GM12878 (cell line): ENCODE measurements at regions of chr1 and their contacts with region 1.

Region 1: GRCh38 chr1:114511032-114511785 is at the start of gene TRIM33:
- DNase-seq: peak; percentile 81
- ATAC-seq: peak; percentile 72
- H3K4me3 ChIP-seq: peak within 1 kb of the TSS; percentile 93
- H3K27ac ChIP-seq: peak within 1 kb of the TSS; percentile 94
- H3K4me1 ChIP-seq: peaks cover 7% of the 10 kb centered on the region; the same call in 1 of the 2 replicates
- H3K27me3 ChIP-seq: no peaks in the 10 kb centered on the region
- CTCF ChIP-seq: no peak
- EP300 ChIP-seq: no peak; a peak in 1 of 4 replicates
- POLR2A ChIP-seq: peak; percentile 85
- RAD21 ChIP-seq: no peak
- polyA plus RNA-seq, gene TRIM33: 9.0 to 10.6 TPM

Region 2: DNA sequence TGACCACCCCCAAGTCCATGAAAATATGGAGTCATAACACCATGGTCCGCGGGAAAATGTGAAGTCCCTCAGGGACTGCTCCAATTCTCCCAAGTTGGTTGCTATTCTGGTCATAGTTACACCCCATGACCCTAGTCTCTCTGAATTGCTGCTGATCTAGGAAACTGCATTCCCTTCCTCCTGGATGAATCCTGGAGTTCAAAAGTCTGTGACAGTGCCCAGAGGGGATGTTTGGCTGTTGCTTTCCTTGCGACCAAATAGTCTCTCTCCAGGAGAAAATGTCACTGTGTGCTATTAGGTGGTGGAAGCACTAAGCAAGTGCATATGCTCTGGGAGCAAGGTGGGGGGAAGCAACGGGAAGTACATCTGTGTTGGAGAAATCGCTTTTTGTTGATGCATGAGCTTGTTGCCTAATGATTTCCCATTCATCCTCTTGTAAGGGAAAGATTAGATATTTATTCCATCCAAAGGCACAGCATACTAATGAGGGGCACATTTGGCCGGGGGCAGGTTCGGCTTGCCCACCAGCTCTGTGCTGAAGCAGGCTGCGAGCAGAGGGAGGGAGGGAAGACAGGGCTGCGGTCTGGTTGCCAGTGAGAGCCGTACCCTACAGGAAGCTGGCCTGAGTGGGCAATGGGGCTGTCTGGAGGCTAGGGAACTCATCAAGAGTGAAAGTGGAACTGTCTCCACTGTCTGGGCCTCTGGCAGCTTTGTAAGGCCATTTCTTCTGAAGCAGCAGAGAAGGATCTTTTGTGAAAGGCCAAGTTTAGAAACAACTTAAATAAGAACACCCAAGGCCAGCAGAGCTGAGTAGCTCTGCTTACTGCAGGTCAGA is 384.7 kb before region 1 on chr1:
- CTCF ChIA-PET with region 1: no interaction called
- POLR2A ChIA-PET with region 1: no interaction called
- RAD21 ChIA-PET with region 1: no interaction called
- SMC1A ChIA-PET with region 1: no interaction called
- in situ Hi-C with region 1: no loop called
- intact Hi-C with region 1: no loop called
- DNase-seq: peak; percentile 31
- ATAC-seq: peak; percentile 87
- H3K4me3 ChIP-seq: no peak overlapping the region
- H3K27ac ChIP-seq: no peak overlapping the region
- H3K4me1 ChIP-seq: peaks cover 6% of the 10 kb centered on the region
- H3K27me3 ChIP-seq: no peaks in the 10 kb centered on the region
- CTCF ChIP-seq: no peak
- EP300 ChIP-seq: no peak
- POLR2A ChIP-seq: no peak
- RAD21 ChIP-seq: no peak

Region 3: GRCh38 chr1:114467488-114467887 is 43.7 kb before region 1 on chr1:
- CTCF ChIA-PET with region 1: interaction called, 5 read pairs
- POLR2A ChIA-PET with region 1: interaction called, 3 read pairs
- RAD21 ChIA-PET with region 1: interaction called, 4 read pairs
- SMC1A ChIA-PET with region 1: interaction called, 13 read pairs
- in situ Hi-C with region 1: no loop called
- intact Hi-C with region 1: no loop called
- DNase-seq: no peak
- ATAC-seq: peak; percentile 75
- H3K4me3 ChIP-seq: no peak overlapping the region
- H3K27ac ChIP-seq: peak overlapping the region; percentile 30
- H3K4me1 ChIP-seq: peaks cover 12% of the 10 kb centered on the region
- H3K27me3 ChIP-seq: no peaks in the 10 kb centered on the region
- CTCF ChIP-seq: no peak
- EP300 ChIP-seq: no peak
- POLR2A ChIP-seq: no peak
- RAD21 ChIP-seq: no peak